ENCODE measurements at regions of chr11 and their contacts with region 1.

Region 1: DNA sequence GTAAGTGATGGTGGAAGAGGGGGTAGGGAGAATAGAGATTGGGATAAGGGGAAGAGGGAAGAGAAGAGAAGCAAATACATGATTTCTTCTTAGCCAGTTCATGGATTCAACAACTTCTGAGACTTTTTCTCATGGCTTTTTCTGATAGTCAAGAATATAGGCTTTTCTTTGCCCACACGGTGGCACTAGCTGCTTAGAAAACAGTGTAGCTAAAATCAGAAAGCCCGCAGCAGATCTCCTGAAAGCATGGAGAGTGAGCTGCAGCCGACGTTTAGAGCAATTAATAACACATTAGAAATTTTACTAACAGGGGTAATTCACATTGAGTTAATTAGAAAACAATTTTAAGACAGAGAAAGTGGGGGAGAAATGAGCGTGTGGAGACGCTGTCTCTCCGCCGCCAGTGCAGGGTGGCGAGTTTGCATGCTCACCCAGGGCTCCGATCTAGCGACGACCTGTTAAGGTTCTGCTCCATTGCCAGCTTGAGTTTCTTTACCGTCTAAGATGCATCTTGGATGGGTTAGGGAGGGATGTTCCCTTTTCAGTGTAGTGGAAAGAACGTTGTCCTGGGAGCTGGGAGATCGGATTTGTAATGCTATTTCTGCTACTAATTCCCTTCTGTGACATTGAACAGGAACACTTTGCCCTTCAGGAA is 3.3 kb upstream of the RAG1 start:
- DNase-seq: peak in 1 of 2 donors; percentile 15
- ATAC-seq: peak in 1 of 2 donors; percentile 70
- H3K4me3 ChIP-seq: peak overlapping the region; percentile 39 to 51 (median 44)
- H3K27ac ChIP-seq: no peak overlapping the region
- H3K4me1 ChIP-seq: peaks cover 0 to 3% of the 10 kb centered on the region in 2 donors
- H3K27me3 ChIP-seq: no peaks in the 10 kb centered on the region
- CTCF ChIP-seq: peak; percentile 33 to 62 (median 41)
- POLR2A ChIP-seq: no peak

Region 2: GRCh38 chr11:36354221-36355003 is 210.1 kb before region 1 on chr11:
- in situ Hi-C with region 1: no loop called
- intact Hi-C with region 1: no loop called
- DNase-seq: no peak
- ATAC-seq: no peak
- H3K4me3 ChIP-seq: no peak overlapping the region
- H3K27ac ChIP-seq: no peak overlapping the region
- H3K4me1 ChIP-seq: no peaks in the 10 kb centered on the region
- H3K27me3 ChIP-seq: no peaks in the 10 kb centered on the region
- CTCF ChIP-seq: no peak
- POLR2A ChIP-seq: no peak

Region 3: GRCh38 chr11:36622431-36623136 is 58.1 kb after region 1 on chr11:
- in situ Hi-C with region 1: no loop called
- intact Hi-C with region 1: loop called (anchors 5 kb)
- DNase-seq: no peak
- ATAC-seq: no peak
- H3K4me3 ChIP-seq: no peak overlapping the region
- H3K27ac ChIP-seq: no peak overlapping the region
- H3K4me1 ChIP-seq: peaks cover 8 to 10% of the 10 kb centered on the region in 2 donors
- H3K27me3 ChIP-seq: no peaks in the 10 kb centered on the region
- CTCF ChIP-seq: no peak
- POLR2A ChIP-seq: no peak

Region 4: GRCh38 chr11:36672813-36673450 is 108.4 kb after region 1 on chr11:
- in situ Hi-C with region 1: loop called in 3 of 4 experiments (anchors 5 to 10 kb)
- intact Hi-C with region 1: loop called (anchors 1 kb)
- DNase-seq: no peak
- ATAC-seq: peak in 1 of 2 donors; percentile 30
- H3K4me3 ChIP-seq: no peak overlapping the region
- H3K27ac ChIP-seq: no peak overlapping the region
- H3K4me1 ChIP-seq: no peaks in the 10 kb centered on the region
- H3K27me3 ChIP-seq: no peaks in the 10 kb centered on the region
- CTCF ChIP-seq: peak; percentile 54 to 80 (median 70)
- POLR2A ChIP-seq: no peak

Region 5: GRCh38 chr11:36746886-36747710 is 182.6 kb after region 1 on chr11:
- in situ Hi-C with region 1: loop called in 3 of 4 experiments (anchors 10 kb)
- intact Hi-C with region 1: loop called (anchors 10 kb)
- DNase-seq: peak; percentile 67 to 75
- ATAC-seq: peak; percentile 94 to 100
- H3K4me3 ChIP-seq: no peak overlapping the region
- H3K27ac ChIP-seq: no peak overlapping the region
- H3K4me1 ChIP-seq: no peaks in the 10 kb centered on the region
- H3K27me3 ChIP-seq: no peaks in the 10 kb centered on the region
- CTCF ChIP-seq: peak; percentile 67 to 93 (median 87)
- POLR2A ChIP-seq: no peak

Region 6: GRCh38 chr11:36774603-36775002 is 210.1 kb after region 1 on chr11:
- in situ Hi-C with region 1: no loop called
- intact Hi-C with region 1: no loop called
- DNase-seq: no peak
- ATAC-seq: peak; percentile 39 to 60
- H3K4me3 ChIP-seq: no peak overlapping the region
- H3K27ac ChIP-seq: no peak overlapping the region
- H3K4me1 ChIP-seq: no peaks in the 10 kb centered on the region
- H3K27me3 ChIP-seq: no peaks in the 10 kb centered on the region
- CTCF ChIP-seq: no peak
- POLR2A ChIP-seq: no peak

Region 7: DNA sequence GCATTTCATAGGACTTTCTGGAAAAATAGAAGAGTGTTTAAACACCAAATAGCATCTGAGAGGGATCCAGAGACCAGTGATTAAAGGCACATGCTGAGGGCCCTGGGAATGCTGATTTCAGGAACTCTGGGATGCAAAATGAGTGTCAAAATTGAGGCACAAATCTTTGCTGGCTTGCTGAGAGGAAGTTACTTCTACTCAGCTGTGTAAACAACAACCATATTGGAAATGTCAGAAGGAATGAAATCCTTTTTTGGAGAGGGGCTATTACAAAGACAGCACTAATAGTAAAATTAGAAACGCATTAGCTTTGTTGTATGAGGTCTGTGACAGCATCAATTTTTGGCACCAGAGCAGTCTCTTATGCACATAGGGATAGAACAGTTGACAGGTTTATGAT is 301.3 kb after region 1 on chr11:
- in situ Hi-C with region 1: no loop called
- intact Hi-C with region 1: no loop called
- DNase-seq: no peak
- ATAC-seq: no peak
- H3K4me3 ChIP-seq: no peak overlapping the region
- H3K27ac ChIP-seq: no peak overlapping the region
- H3K4me1 ChIP-seq: no peaks in the 10 kb centered on the region
- H3K27me3 ChIP-seq: no peaks in the 10 kb centered on the region
- CTCF ChIP-seq: no peak
- POLR2A ChIP-seq: no peak

Region 8: GRCh38 chr11:37038911-37039310 is 474.4 kb after region 1 on chr11:
- in situ Hi-C with region 1: no loop called
- intact Hi-C with region 1: no loop called
- DNase-seq: no peak
- ATAC-seq: no peak
- H3K4me3 ChIP-seq: no peak overlapping the region
- H3K27ac ChIP-seq: no peak overlapping the region
- H3K4me1 ChIP-seq: no peaks in the 10 kb centered on the region
- H3K27me3 ChIP-seq: no peaks in the 10 kb centered on the region
- CTCF ChIP-seq: no peak
- POLR2A ChIP-seq: no peak